KBM-7 (cell line): ENCODE measurements at regions of chr7 and their contacts with region 1.

Region 1: DNA sequence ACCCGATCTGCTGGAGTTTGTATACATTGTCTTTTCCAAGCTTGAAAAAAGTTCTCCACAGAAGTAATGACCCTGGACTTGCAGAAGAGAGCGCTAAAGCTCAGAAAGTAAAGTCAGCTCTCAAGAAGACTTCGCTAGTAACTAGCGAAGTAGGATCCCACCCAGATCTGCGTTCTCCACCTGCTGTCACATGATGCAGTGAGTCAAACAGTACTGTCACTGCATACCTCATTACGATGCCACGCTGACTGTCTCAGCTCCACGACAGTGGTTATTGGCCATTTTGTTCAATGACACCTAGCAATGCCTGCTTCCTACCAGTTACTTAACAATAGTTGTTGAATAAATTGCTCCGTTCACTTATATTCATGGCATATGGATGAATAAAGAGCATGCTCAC is 29.7 kb upstream of the SEC61G start:
- DNase-seq: peak; percentile 53

Region 2: DNA sequence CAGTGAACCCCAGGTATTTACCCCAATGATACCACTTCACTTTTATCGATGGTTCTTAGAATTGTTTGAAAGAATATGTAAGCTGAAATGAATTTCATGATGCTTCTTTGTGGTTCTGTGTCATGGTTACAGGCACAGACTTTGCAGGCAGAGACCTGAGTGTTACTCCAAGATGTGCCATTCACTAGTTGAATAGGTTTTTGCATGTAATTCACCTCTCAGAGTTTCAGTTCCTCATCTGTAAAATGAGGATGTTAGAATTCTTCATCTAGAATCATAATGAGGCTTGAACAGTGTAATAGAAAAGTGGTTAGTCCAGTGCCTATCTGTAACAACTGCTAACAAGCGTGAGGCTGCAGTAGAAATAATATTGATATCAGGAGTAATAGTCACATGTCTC is 191.9 kb before region 1 on chr7:
- in situ Hi-C with region 1: no loop called
- DNase-seq: no peak

Region 3: GRCh38 chr7:55140221-55140940 is 351.7 kb after region 1 on chr7:
- in situ Hi-C with region 1: no loop called
- DNase-seq: no peak

Region 4: GRCh38 chr7:55255496-55256435 is 467.1 kb after region 1 on chr7:
- in situ Hi-C with region 1: loop called (anchors 25 kb)
- DNase-seq: peak; percentile 78

Region 5: DNA sequence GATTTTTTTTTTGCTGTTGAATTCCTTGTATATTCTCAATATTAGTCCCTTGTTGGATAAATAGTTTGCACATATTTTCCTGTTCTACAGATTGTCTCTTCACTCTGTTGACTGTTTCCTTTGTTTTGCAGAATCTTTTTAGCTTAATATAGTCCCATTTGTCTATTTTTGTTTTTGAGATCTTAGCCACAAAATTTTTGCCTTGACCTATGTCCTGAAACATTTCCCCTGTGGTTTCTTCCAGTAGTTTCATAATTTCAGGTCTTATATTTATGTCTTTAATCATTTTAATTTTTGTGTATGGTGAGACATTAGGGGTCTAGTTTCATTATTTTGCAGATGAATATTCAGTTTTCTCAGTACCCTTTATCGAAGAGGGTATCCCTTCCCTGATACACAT is 669.1 kb after region 1 on chr7:
- in situ Hi-C with region 1: no loop called
- DNase-seq: no peak

Region 6: GRCh38 chr7:56199639-56200038 is 1411.0 kb after region 1 on chr7:
- in situ Hi-C with region 1: no loop called
- DNase-seq: no peak